ENCODE measurements at regions of chrX and their contacts with region 1.

Region 1: GRCh38 chrX:136711147-136711546 is 63.2 kb downstream of the CD40LG start:
- DNase-seq: peak; percentile 29
- ATAC-seq: no peak
- H3K4me3 ChIP-seq: no peak overlapping the region
- H3K4me3 Mint-ChIP-seq: peak overlapping the region; percentile 57
- H3K27ac ChIP-seq: peak overlapping the region; percentile 79 to 87
- H3K27ac Mint-ChIP-seq: peak overlapping the region; percentile 77
- H3K4me1 ChIP-seq: peaks cover 23 to 32% of the 10 kb centered on the region in 2 donors
- H3K4me1 Mint-ChIP-seq: peaks cover 33% of the 10 kb centered on the region
- H3K27me3 ChIP-seq: no peaks in the 10 kb centered on the region
- H3K27me3 Mint-ChIP-seq: no peaks in the 10 kb centered on the region
- CTCF ChIP-seq: no peak

Region 2: GRCh38 chrX:136608295-136609171 is 102.6 kb before region 1 on chrX:
- CTCF ChIA-PET with region 1: interaction called, 12 read pairs
- POLR2A ChIA-PET with region 1: no interaction called
- intact Hi-C with region 1: no loop called
- DNase-seq: peak; percentile 47
- ATAC-seq: peak; percentile 43
- H3K4me3 ChIP-seq: no peak overlapping the region
- H3K4me3 Mint-ChIP-seq: no peak overlapping the region
- H3K27ac ChIP-seq: no peak overlapping the region
- H3K27ac Mint-ChIP-seq: no peak overlapping the region
- H3K4me1 ChIP-seq: peaks cover 0 to 3% of the 10 kb centered on the region in 2 donors
- H3K4me1 Mint-ChIP-seq: no peaks in the 10 kb centered on the region
- H3K27me3 ChIP-seq: no peaks in the 10 kb centered on the region
- H3K27me3 Mint-ChIP-seq: no peaks in the 10 kb centered on the region
- CTCF ChIP-seq: peak; percentile 48

Region 3: DNA sequence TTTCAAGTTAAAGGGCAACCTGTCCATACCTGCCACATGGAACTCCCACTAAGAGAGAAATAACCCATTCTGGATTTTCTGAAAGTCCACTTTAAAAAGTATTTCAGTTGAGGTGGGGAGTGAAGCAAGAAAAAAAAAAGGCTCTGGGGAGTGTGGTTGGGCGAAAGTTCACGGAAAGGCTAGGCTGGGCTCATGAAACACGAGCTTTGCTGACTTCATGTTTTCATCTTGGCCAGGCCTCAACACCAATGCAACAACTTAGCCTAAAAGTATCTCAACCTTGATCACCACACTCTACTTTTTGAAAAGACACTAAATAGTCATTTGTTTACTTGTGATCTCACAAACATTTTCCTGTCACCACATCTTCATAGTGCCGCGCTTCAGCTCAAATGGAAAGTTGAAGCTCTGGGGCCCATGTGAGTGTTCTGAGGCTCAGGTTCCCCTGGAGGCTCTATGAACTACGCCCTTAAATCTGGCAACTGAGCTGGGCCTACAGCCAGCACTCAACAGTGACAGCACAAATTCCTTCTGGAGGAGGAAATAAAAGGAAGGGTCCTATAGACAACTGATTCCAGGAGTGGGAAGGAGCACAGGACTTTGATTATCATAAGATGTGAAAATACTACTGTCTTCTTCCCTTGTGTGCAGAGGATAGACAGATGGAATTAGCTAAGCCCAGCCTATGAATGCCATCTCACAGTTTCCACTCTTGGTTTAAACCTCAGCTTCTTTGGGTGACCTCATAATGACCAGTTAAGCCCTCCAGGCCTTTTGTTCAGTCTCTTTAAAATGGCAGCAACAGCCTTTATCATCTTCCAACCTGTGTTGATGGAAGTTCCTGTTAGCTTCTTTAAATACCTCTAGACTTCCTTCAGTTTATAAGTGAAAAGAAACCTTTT is 58.1 kb before region 1 on chrX:
- CTCF ChIA-PET with region 1: no interaction called
- POLR2A ChIA-PET with region 1: no interaction called
- intact Hi-C with region 1: no loop called
- DNase-seq: no peak
- ATAC-seq: no peak
- H3K4me3 ChIP-seq: no peak overlapping the region
- H3K4me3 Mint-ChIP-seq: no peak overlapping the region
- H3K27ac ChIP-seq: no peak overlapping the region
- H3K27ac Mint-ChIP-seq: no peak overlapping the region
- H3K4me1 ChIP-seq: peaks cover 0 to 2% of the 10 kb centered on the region in 2 donors
- H3K4me1 Mint-ChIP-seq: peaks cover under 1% of the 10 kb centered on the region
- H3K27me3 ChIP-seq: no peaks in the 10 kb centered on the region
- H3K27me3 Mint-ChIP-seq: no peaks in the 10 kb centered on the region
- CTCF ChIP-seq: no peak

Region 4: DNA sequence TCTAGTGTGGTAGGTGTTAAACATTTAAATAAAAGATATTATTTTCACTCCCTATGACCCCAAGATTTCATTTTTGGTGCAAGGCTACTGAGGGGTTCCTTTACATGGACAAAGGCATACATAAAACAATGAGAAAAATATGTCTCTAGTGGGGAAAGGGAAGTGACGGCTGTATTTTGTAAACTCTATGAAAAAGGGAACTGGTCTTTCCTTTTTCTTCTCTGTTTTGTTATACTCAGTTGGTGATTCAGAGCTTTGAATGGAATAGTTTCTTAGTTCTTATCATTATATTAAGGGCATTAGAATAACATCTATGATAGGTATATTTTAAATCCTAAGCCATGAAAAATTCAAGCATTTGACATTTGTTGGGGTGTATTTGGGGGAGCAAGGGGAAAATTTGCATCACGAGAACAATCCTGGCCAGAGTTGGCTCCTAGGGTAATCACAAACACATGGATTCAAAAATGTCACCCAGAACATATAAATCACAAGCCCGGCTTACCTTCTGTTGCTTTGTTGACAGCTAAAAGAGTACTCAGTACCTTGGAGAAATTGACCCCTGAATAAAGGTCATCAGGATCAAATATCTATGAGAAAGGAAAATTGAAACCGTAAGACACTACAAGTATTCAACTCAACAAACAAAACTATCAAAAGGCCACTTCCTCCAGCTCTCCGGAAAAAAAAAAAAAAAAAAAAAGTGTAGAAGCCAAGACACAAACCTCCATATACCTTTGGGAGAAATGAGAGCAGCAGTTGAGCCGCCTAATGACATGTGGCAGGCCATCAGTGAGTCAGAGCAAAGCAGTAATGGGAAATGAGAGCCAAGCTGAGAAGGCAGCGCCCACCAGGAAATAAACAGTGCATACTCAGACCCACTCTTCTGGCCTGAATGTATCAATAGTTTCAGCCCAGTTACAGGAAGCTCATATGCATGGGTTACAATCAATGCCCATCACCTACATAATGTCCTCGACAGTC is 36.1 kb after region 1 on chrX:
- CTCF ChIA-PET with region 1: no interaction called
- POLR2A ChIA-PET with region 1: no interaction called
- intact Hi-C with region 1: loop called (anchors 1 kb)
- DNase-seq: peak; percentile 47
- ATAC-seq: peak; percentile 74
- H3K4me3 ChIP-seq: no peak overlapping the region
- H3K4me3 Mint-ChIP-seq: peak overlapping the region; percentile 72
- H3K27ac ChIP-seq: peak overlapping the region; percentile 69 to 84
- H3K27ac Mint-ChIP-seq: peak overlapping the region; percentile 97
- H3K4me1 ChIP-seq: peaks cover 60 to 76% of the 10 kb centered on the region in 2 donors
- H3K4me1 Mint-ChIP-seq: peaks cover 75% of the 10 kb centered on the region
- H3K27me3 ChIP-seq: no peaks in the 10 kb centered on the region
- H3K27me3 Mint-ChIP-seq: no peaks in the 10 kb centered on the region
- CTCF ChIP-seq: no peak

Region 5: DNA sequence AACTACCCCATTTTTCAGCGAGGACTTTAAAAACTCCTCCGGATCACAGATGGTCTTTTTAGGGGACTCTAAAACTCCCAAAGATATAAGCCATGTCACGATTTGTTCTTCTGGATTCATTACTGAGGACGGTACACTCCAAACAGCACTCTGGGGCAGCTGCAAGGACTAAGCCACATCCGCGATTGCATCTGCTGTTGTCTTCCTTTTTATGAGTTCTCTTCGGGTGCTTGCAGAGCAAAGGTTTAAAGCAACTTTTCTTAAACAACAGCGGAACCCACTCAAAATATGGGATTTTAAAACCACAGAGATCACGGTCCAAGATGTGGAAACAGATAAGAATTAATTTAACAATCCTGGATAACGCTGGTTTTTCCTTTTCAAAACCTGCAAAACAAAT is 69.6 kb after region 1 on chrX and contains the start of gene ARHGEF6:
- CTCF ChIA-PET with region 1: no interaction called
- POLR2A ChIA-PET with region 1: no interaction called
- intact Hi-C with region 1: loop called (anchors 5 kb)
- DNase-seq: peak; percentile 37
- ATAC-seq: peak; percentile 58
- H3K4me3 ChIP-seq: peak within 1 kb of the TSS; percentile 56 to 81 (median 63)
- H3K4me3 Mint-ChIP-seq: peak within 1 kb of the TSS; percentile 91
- H3K27ac ChIP-seq: peak within 1 kb of the TSS; percentile 71 to 88
- H3K27ac Mint-ChIP-seq: peak within 1 kb of the TSS; percentile 87
- H3K4me1 ChIP-seq: peaks cover 30 to 41% of the 10 kb centered on the region in 2 donors
- H3K4me1 Mint-ChIP-seq: peaks cover 56% of the 10 kb centered on the region
- H3K27me3 ChIP-seq: no peaks in the 10 kb centered on the region
- H3K27me3 Mint-ChIP-seq: no peaks in the 10 kb centered on the region
- CTCF ChIP-seq: no peak
- total RNA-seq, gene ARHGEF6: 43.4 and 45.6 TPM in 2 replicates

Region 6: DNA sequence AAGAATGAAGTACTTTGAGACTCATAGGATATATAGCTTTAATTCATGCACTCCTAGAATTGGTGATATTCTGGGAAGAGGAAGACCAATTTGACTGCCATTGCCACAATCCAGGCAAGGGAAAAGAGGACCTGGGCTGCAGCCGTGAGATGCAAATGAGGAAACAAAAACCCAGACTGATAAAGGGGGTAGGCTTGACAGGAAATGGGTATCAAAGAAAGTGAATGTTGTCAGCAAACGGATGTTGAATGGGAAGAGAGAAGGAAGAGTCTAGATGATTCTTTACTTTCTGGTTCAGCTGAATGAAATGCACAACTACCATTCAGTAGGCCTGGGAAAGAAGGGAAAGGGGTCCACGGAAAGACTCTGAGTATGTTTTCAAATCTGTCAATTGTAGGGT is 86.6 kb after region 1 on chrX:
- CTCF ChIA-PET with region 1: no interaction called
- POLR2A ChIA-PET with region 1: no interaction called
- intact Hi-C with region 1: no loop called
- DNase-seq: no peak
- ATAC-seq: no peak
- H3K4me3 ChIP-seq: no peak overlapping the region
- H3K4me3 Mint-ChIP-seq: no peak overlapping the region
- H3K27ac ChIP-seq: no peak overlapping the region
- H3K27ac Mint-ChIP-seq: peak overlapping the region; percentile 26
- H3K4me1 ChIP-seq: peaks cover 5 to 7% of the 10 kb centered on the region in 2 donors
- H3K4me1 Mint-ChIP-seq: peaks cover 6% of the 10 kb centered on the region
- H3K27me3 ChIP-seq: no peaks in the 10 kb centered on the region
- H3K27me3 Mint-ChIP-seq: no peaks in the 10 kb centered on the region
- CTCF ChIP-seq: no peak

Region 7: DNA sequence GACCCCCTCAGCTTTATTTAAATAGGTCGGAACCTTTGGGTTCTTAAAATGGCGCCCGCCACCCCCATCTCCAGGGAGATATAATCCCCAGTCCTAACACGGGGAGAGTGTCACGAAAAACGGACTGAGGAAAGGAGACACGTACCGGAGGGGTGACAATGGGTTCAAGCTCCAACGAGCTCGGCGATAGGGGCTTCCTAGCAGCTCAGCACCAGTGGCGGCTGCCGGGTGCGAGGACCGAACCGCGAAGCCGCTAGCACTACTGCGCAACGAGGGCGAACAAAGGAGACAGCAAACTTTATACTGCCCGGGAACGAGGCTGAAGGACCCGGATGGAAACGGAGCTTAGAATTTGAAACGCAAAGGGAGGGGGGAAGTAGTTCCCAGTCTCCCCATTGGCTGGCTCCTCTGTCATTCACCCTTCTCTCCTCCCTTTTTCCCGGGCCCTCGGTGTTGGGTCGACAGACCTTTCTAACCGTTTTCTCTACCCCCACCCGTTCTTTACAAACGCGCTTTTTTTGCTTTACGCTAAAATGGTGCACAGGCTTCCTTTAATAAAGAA is 169.4 kb after region 1 on chrX and contains the start of gene RBMX:
- CTCF ChIA-PET with region 1: interaction called, 6 read pairs
- POLR2A ChIA-PET with region 1: interaction called, 7 read pairs
- intact Hi-C with region 1: loop called (anchors 2 kb)
- DNase-seq: peak; percentile 94
- ATAC-seq: peak; percentile 86
- H3K4me3 ChIP-seq: peak within 1 kb of the TSS; percentile 67 to 97 (median 87)
- H3K4me3 Mint-ChIP-seq: peak within 1 kb of the TSS; percentile 98
- H3K27ac ChIP-seq: peak within 1 kb of the TSS; percentile 96
- H3K27ac Mint-ChIP-seq: peak within 1 kb of the TSS; percentile 100
- H3K4me1 ChIP-seq: peaks cover 0 to 8% of the 10 kb centered on the region in 2 donors
- H3K4me1 Mint-ChIP-seq: peaks cover 9% of the 10 kb centered on the region
- H3K27me3 ChIP-seq: no peaks in the 10 kb centered on the region
- H3K27me3 Mint-ChIP-seq: no peaks in the 10 kb centered on the region
- CTCF ChIP-seq: no peak
- total RNA-seq, gene RBMX: 231 and 239 TPM in 2 replicates

Region 8: GRCh38 chrX:136920001-136920400 is 208.9 kb after region 1 on chrX:
- CTCF ChIA-PET with region 1: interaction called, 12 read pairs
- POLR2A ChIA-PET with region 1: no interaction called
- intact Hi-C with region 1: loop called (anchors 1 kb)
- DNase-seq: no peak
- ATAC-seq: no peak
- H3K4me3 ChIP-seq: no peak overlapping the region
- H3K4me3 Mint-ChIP-seq: no peak overlapping the region
- H3K27ac ChIP-seq: no peak overlapping the region
- H3K27ac Mint-ChIP-seq: no peak overlapping the region
- H3K4me1 ChIP-seq: no peaks in the 10 kb centered on the region
- H3K4me1 Mint-ChIP-seq: peaks cover 1% of the 10 kb centered on the region
- H3K27me3 ChIP-seq: no peaks in the 10 kb centered on the region
- H3K27me3 Mint-ChIP-seq: no peaks in the 10 kb centered on the region
- CTCF ChIP-seq: no peak